Activated CD4-positive, alpha-beta memory T cell treated with anti-CD3 and anti-CD28 coated beads for 36 hours (primary cell): ENCODE measurements at regions of chr17 and their contacts with region 1.

Region 1: DNA sequence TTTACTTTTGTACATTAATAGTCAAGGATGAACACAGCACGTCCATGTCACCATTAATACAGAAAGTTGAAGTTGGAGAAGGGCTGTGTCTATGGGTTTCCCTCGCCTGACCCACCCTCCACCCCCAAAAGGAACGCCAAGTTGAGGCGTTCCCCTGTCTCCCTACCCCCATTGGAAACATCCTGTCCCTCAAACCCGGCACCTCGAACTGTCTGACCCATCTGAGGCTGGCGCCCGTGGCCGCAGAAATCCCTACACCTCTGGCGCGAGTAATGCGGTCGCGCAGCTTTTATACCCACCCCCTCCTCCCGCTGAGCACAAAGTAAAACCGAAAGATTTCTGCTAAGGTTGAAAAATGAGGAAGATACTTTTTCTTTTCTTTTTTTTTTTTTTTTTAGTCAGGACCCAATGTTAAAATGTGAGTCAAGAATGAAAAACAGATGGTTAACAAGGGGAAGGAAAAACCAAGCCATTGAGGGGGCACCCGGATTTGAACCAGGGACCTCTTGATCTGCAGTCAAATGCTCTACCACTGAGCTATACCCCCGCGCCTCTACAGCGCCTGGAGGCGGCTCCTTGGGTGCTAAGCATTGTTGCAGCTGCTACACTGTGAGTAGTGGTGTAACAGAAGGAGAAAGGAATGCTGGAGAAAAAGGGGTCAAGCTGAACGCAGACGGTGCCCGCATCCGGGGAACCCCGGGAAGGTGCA is 887 bp upstream of the LASP1 start:
- DNase-seq: peak; percentile 94
- H3K4me3 Mint-ChIP-seq: peak overlapping the region; percentile 87
- H3K27ac Mint-ChIP-seq: peak overlapping the region; percentile 96
- H3K4me1 Mint-ChIP-seq: peaks cover 44% of the 10 kb centered on the region
- H3K27me3 Mint-ChIP-seq: peaks cover 2% of the 10 kb centered on the region

Region 2: DNA sequence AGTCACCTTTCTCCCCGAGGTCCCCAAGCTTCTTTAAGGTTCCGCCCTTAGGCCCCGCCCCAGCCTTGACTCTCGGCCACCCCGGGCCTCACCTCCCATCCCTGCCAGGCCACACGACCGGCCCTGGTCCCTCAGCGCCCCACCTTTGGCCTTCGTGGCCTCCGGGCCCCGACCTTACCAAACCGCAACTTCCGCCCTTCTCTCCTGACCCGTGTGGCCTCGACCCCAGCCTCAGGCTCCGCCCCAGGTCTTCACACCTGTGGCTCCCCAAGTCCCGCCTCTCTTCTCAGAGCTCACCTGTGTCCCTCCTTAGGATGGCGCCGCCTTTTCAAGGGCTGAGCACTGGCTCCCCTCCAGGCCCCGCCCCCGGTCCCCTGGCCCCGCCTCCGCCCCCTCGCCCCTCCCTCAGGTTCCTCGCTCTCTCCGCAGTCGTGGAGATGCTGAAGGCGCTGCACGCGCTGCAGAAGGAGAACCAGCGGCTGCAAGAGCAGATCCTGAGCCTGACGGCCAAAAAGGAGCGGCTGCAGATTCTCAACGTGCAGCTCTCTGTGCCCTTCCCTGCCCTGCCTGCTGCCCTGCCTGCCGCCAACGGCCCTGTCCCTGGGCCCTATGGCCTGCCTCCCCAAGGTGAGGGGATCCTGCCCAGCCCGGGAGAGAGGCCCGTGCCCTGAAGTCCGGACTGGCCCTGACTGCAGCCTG is 148.9 kb before region 1 on chr17:
- CTCF ChIA-PET with region 1: no interaction called
- POLR2A ChIA-PET with region 1: no interaction called
- intact Hi-C with region 1: no loop called
- DNase-seq: no peak
- H3K4me3 Mint-ChIP-seq: no peak overlapping the region
- H3K27ac Mint-ChIP-seq: no peak overlapping the region
- H3K4me1 Mint-ChIP-seq: peaks cover 44% of the 10 kb centered on the region
- H3K27me3 Mint-ChIP-seq: no peaks in the 10 kb centered on the region

Region 3: DNA sequence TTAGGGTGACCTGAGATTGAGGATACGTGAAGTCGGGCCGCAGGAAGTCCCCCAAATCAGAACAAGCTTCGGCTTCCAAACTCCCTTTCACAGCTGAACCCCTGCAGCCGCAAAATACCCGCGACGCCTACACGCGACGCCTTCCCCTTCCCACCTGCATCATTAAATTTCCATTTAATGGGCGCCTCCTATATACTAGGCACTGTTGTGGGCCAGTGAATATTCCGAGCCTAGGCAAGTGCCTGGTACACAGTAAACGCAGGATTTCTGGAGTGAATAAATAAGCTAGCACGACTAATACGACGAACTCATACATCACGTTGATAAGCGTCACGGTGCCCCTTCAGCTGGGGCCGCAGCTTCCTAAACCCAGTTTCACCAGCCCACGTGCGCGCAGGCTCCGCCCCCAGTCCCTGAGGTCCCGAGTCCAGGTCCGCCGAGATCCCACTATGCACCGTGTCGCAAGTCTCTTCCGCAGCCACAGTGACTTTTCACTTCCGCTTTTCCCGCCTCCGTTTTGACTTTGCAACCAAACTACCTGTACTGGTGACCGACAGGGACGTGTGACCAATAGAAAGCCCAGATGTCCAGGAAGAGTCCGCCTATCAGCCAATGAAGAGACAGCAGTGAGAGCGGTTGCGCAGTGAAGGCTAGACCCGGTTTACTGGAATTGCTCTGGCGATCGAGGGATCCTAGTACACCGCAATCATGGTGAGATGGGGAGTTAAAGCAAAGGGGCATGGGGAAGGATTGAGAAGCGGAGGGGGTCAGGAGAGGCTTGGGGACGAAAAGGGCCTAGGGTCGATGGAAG is 116.6 kb before region 1 on chr17 and contains the start of gene PSMB3:
- CTCF ChIA-PET with region 1: no interaction called
- POLR2A ChIA-PET with region 1: interaction called, 3 read pairs
- intact Hi-C with region 1: loop called (anchors 1 kb)
- DNase-seq: peak; percentile 99
- H3K4me3 Mint-ChIP-seq: peak within 1 kb of the TSS; percentile 92
- H3K27ac Mint-ChIP-seq: peak within 1 kb of the TSS; percentile 94
- H3K4me1 Mint-ChIP-seq: peaks cover 40% of the 10 kb centered on the region
- H3K27me3 Mint-ChIP-seq: peaks cover 27% of the 10 kb centered on the region
- total RNA-seq, gene PSMB3: 335 to 348 TPM

Region 4: DNA sequence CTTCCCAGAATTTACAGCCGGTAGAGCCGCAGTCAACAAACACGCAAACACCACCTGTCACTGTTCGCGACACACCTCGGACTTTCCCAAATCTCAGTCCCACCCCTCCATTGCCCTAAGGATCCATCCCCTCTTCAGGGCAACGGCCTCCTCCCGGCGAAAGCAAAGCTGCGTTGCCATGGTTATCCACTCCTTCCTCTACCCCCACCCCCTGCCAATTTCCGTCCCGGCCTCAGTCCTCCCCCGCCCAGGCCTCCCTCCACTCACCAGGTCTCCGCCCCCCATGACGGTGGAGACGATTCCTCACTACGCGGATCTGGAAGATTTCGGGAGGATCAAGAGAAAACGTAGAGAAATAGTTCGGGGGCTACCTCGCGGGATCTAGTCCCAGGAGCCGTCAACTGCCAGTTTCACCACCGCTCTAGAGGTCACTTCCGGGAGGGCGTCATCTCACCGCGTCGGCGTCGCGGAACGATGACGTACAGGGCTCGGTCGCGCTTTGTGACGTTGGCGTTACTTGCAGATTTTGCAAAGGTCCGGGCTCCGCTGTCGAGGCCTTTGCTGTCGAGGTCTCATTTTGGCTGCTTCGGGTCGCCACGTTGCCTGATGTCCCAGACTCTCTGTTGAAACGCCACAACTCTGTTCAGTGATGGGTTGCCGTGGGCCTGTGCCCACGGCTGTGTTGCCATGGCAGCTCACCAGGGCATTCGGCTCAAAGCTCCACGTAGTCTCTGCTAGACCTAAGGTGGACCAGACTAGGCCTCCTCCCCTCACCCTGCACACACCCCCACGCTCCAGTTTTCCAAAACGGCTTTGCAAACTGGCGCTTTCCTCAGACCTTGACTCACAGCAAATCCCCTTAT is 43.8 kb before region 1 on chr17 and contains the start of gene CWC25:
- CTCF ChIA-PET with region 1: no interaction called
- POLR2A ChIA-PET with region 1: interaction called, 9 read pairs
- intact Hi-C with region 1: loop called (anchors 1 kb)
- DNase-seq: peak; percentile 98
- H3K4me3 Mint-ChIP-seq: peak within 1 kb of the TSS; percentile 98
- H3K27ac Mint-ChIP-seq: peak within 1 kb of the TSS; percentile 99
- H3K4me1 Mint-ChIP-seq: peaks cover 26% of the 10 kb centered on the region
- H3K27me3 Mint-ChIP-seq: no peaks in the 10 kb centered on the region
- total RNA-seq, gene CWC25: 21.1 to 21.5 TPM

Region 5: DNA sequence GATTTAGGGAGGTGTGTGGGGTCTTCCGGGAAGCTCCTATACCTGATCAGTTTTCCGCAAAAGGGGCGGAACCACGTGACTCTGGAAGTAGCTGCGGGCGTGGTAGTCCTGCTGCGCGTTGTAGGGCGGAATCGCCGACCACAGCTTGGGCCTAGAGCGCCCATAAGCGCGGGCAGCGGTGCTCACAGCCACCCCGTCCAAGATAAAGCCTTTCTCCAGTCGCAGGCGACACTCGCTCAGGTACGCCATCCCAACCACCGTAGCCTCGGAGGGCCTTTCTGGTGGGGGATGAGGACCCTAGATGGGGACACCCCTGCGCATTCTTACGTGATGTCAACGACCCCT is 27.9 kb before region 1 on chr17:
- CTCF ChIA-PET with region 1: no interaction called
- POLR2A ChIA-PET with region 1: no interaction called
- intact Hi-C with region 1: no loop called
- DNase-seq: peak; percentile 37
- H3K4me3 Mint-ChIP-seq: peak overlapping the region; percentile 58
- H3K27ac Mint-ChIP-seq: no peak overlapping the region
- H3K4me1 Mint-ChIP-seq: no peaks in the 10 kb centered on the region
- H3K27me3 Mint-ChIP-seq: no peaks in the 10 kb centered on the region

Region 6: GRCh38 chr17:38879878-38880682 is 11.1 kb after region 1 on chr17:
- CTCF ChIA-PET with region 1: interaction called, 24 read pairs
- POLR2A ChIA-PET with region 1: interaction called, 19 read pairs
- intact Hi-C with region 1: loop called (anchors 1 kb)
- DNase-seq: no peak
- H3K4me3 Mint-ChIP-seq: no peak overlapping the region
- H3K27ac Mint-ChIP-seq: peak overlapping the region; percentile 80
- H3K4me1 Mint-ChIP-seq: peaks cover 86% of the 10 kb centered on the region
- H3K27me3 Mint-ChIP-seq: no peaks in the 10 kb centered on the region

Region 7: GRCh38 chr17:38898812-38899348 is 29.9 kb after region 1 on chr17:
- CTCF ChIA-PET with region 1: interaction called, 16 read pairs
- POLR2A ChIA-PET with region 1: interaction called, 31 read pairs
- intact Hi-C with region 1: loop called (anchors 1 kb)
- DNase-seq: peak; percentile 94
- H3K4me3 Mint-ChIP-seq: peak overlapping the region; percentile 58
- H3K27ac Mint-ChIP-seq: peak overlapping the region; percentile 94
- H3K4me1 Mint-ChIP-seq: peaks cover 67% of the 10 kb centered on the region
- H3K27me3 Mint-ChIP-seq: no peaks in the 10 kb centered on the region

Region 8: GRCh38 chr17:38967290-38967738 is 98.3 kb after region 1 on chr17 and contains the start of gene FBXO47:
- CTCF ChIA-PET with region 1: no interaction called
- POLR2A ChIA-PET with region 1: no interaction called
- intact Hi-C with region 1: loop called (anchors 5 kb)
- DNase-seq: peak; percentile 91
- H3K4me3 Mint-ChIP-seq: peak within 1 kb of the TSS; percentile 73
- H3K27ac Mint-ChIP-seq: peak within 1 kb of the TSS; percentile 77
- H3K4me1 Mint-ChIP-seq: peaks cover 13% of the 10 kb centered on the region
- H3K27me3 Mint-ChIP-seq: no peaks in the 10 kb centered on the region
- total RNA-seq, gene FBXO47: not detected